Lower leg skin (tissue), 4 donors: ENCODE measurements at regions of chr13 and their contacts with region 1.

Region 1: DNA sequence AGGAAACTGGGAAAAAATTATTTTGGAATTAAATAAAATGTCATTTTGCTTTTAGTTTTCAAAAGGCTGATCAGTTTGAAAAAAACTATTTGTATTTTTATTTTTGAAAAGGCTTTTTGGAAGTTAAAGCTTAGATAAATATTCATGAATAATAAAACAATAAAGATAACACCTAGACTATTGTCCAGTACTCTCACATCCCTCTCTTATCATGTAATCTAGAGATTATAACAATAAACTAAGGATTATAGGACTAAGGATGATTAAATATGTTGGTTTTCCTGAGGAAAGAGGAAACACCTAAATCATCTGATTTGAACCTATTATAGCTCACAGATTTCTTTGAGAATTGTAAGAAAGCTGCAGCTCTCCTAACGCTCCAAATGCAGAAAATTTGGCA is 81.4 kb upstream of the AKAP11 start:
- DNase-seq: no peak
- H3K4me3 ChIP-seq: no peak overlapping the region
- CTCF ChIP-seq: no peak
- POLR2A ChIP-seq: no peak

Region 2: GRCh38 chr13:42153199-42154113 is 37.1 kb before region 1 on chr13:
- intact Hi-C with region 1: no loop called
- DNase-seq: no peak
- H3K4me3 ChIP-seq: no peak overlapping the region
- CTCF ChIP-seq: no peak
- POLR2A ChIP-seq: no peak

Region 3: DNA sequence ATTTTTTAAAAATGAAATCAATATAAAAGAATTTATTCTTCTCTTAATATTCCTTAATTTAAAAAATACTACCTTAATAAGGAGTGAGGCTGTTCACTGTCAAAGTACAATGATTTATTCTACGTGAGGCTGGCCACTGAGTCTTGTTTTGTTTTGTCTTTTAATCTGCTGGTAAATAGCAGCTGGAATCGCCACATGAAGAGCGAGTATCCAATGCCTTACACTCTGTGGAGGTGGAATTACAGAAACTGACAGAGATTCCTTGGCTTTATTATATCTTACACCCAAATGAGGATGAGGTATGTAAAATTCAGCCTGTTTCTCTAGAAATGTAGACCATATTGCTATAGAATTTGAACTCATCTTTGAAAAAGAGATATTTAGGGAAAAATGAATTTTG is 28.5 kb after region 1 on chr13:
- intact Hi-C with region 1: loop called (anchors 1 kb)
- DNase-seq: no peak
- H3K4me3 ChIP-seq: no peak overlapping the region
- CTCF ChIP-seq: no peak
- POLR2A ChIP-seq: no peak

Region 4: DNA sequence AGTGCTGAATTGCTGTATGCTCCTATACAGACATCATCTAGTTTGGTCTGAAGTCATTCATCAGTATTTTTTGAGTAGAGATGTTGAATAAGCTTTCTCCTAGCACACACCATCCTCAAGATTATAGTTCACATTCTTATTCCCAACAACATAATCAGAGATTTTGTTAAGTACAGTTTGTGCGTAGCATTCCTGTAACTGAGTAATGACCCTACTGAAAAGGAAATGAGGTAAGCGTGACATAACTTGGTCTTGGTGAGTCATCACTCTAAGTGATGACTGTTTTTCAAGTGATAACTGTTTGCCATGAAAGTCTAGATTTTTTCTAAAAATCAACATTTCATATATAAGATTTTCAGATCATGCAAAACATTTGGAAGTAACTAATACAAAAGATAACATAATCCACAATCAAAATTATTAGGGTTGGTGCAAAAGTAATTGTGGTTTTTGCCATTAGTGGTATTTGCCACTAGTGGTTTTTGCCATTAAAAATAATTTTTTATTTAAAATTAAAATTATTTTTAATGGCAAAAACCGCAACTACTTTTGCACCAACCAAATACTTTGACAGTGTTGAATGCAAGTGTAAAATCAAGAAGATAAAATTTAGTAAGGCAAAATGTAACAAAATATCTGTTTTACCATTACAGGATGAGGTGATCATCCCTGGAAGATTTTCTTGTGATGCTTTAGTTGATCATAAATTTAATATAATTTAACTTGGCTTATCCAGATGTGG is 572.6 kb after region 1 on chr13:
- intact Hi-C with region 1: no loop called
- DNase-seq: no peak
- H3K4me3 ChIP-seq: no peak overlapping the region
- CTCF ChIP-seq: no peak
- POLR2A ChIP-seq: no peak

Region 5: GRCh38 chr13:43261001-43261400 is 1070.5 kb after region 1 on chr13:
- intact Hi-C with region 1: no loop called
- DNase-seq: no peak
- H3K4me3 ChIP-seq: no peak overlapping the region
- CTCF ChIP-seq: no peak
- POLR2A ChIP-seq: no peak